MCF 10A (cell line): ENCODE measurements at regions of chrX and their contacts with region 1.

Region 1: GRCh38 chrX:24760363-24761000 is 66.8 kb downstream of the POLA1 start:
- DNase-seq: no peak
- H3K4me3 Mint-ChIP-seq: no peak overlapping the region
- H3K27ac Mint-ChIP-seq: no peak overlapping the region
- H3K4me1 Mint-ChIP-seq: no peaks in the 10 kb centered on the region
- H3K27me3 Mint-ChIP-seq: peaks cover 58% of the 10 kb centered on the region
- CTCF ChIP-seq: no peak

Region 2: GRCh38 chrX:24748202-24748843 is 12.2 kb before region 1 on chrX:
- CTCF ChIA-PET with region 1: interaction called, 42 read pairs
- POLR2A ChIA-PET with region 1: no interaction called
- intact Hi-C with region 1: no loop called
- DNase-seq: no peak
- H3K4me3 Mint-ChIP-seq: no peak overlapping the region
- H3K27ac Mint-ChIP-seq: no peak overlapping the region
- H3K4me1 Mint-ChIP-seq: no peaks in the 10 kb centered on the region
- H3K27me3 Mint-ChIP-seq: peaks cover 34% of the 10 kb centered on the region
- CTCF ChIP-seq: no peak